ENCODE measurements at regions of chr14 and their contacts with region 1.

Region 1: GRCh38 chr14:22556990-22557623 is 31.9 kb downstream of the DAD1 start:
- DNase-seq: peak; percentile 93
- ATAC-seq: peak; percentile 42
- H3K4me3 ChIP-seq: peak overlapping the region; percentile 7 to 71 (median 49)
- H3K4me3 Mint-ChIP-seq: peak overlapping the region; percentile 73
- H3K27ac ChIP-seq: peak overlapping the region; percentile 99 to 100
- H3K27ac Mint-ChIP-seq: peak overlapping the region; percentile 97
- H3K4me1 ChIP-seq: peaks cover 61 to 85% of the 10 kb centered on the region in 2 donors
- H3K4me1 Mint-ChIP-seq: peaks cover 84% of the 10 kb centered on the region
- H3K27me3 ChIP-seq: no peaks in the 10 kb centered on the region
- H3K27me3 Mint-ChIP-seq: peaks cover 3% of the 10 kb centered on the region
- CTCF ChIP-seq: peak; percentile 100

Region 2: DNA sequence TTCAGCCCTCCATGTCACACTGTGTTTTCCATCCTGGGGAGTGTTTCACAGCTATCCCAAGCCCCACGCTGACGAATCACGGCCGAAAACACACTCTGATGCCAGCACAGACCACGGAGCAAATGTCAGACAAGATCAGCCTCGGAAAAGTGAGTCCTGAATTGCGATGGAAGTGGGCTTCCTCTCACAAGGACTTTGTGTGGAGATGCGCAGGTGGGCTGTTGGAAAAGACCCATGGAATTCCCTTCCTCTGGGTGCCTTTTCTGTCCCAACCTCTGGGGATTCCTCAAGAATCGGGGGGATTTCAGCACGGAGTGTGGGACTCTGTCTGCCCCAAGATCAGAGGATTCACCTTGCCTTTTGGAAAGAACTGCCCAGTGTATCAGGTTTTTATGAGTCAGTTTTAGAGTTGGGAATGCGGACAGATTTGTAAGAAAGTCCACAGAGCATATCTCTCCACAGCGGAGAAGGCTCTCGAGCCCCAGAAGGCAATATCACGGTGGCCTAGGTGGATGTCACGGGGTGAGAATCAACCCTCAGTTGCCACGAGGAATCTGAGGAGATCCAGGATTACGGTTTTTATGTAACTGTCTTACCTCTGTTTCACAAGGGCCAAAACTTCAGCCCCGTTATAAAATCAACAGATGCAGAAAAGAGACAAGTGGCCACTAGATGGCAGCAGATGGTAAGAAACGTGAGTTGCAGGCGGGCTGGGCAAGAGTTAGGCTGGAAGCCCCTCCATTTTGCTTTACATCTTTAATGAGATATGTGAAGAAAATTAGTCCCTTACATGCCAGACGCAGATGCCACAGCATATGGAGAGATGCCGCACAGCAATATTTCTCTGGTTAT is 170.0 kb before region 1 on chr14:
- CTCF ChIA-PET with region 1: interaction called, 354 read pairs
- POLR2A ChIA-PET with region 1: interaction called, 14 read pairs
- intact Hi-C with region 1: loop called (anchors 1 kb)
- DNase-seq: peak; percentile 91
- ATAC-seq: peak; percentile 34
- H3K4me3 ChIP-seq: no peak overlapping the region
- H3K4me3 Mint-ChIP-seq: peak overlapping the region; percentile 69
- H3K27ac ChIP-seq: no peak overlapping the region
- H3K27ac Mint-ChIP-seq: peak overlapping the region; percentile 12
- H3K4me1 ChIP-seq: peaks cover 38 to 49% of the 10 kb centered on the region in 2 donors
- H3K4me1 Mint-ChIP-seq: peaks cover 82% of the 10 kb centered on the region
- H3K27me3 ChIP-seq: no peaks in the 10 kb centered on the region
- H3K27me3 Mint-ChIP-seq: no peaks in the 10 kb centered on the region
- CTCF ChIP-seq: peak; percentile 83

Region 3: GRCh38 chr14:22491683-22492621 is 65.2 kb before region 1 on chr14:
- CTCF ChIA-PET with region 1: interaction called, 44 read pairs
- POLR2A ChIA-PET with region 1: interaction called, 7 read pairs
- intact Hi-C with region 1: loop called (anchors 2 kb)
- DNase-seq: peak; percentile 52
- ATAC-seq: peak; percentile 38
- H3K4me3 ChIP-seq: no peak overlapping the region
- H3K4me3 Mint-ChIP-seq: peak overlapping the region; percentile 30
- H3K27ac ChIP-seq: peak overlapping the region; percentile 16 to 26
- H3K27ac Mint-ChIP-seq: peak overlapping the region; percentile 86
- H3K4me1 ChIP-seq: peaks cover 25 to 71% of the 10 kb centered on the region in 2 donors
- H3K4me1 Mint-ChIP-seq: peaks cover 93% of the 10 kb centered on the region
- H3K27me3 ChIP-seq: no peaks in the 10 kb centered on the region
- H3K27me3 Mint-ChIP-seq: no peaks in the 10 kb centered on the region
- CTCF ChIP-seq: no peak

Region 4: GRCh38 chr14:22536853-22537338 is 20.2 kb before region 1 on chr14:
- CTCF ChIA-PET with region 1: interaction called, 72 read pairs
- POLR2A ChIA-PET with region 1: interaction called, 16 read pairs
- intact Hi-C with region 1: no loop called
- DNase-seq: no peak
- ATAC-seq: peak; percentile 96
- H3K4me3 ChIP-seq: no peak overlapping the region
- H3K4me3 Mint-ChIP-seq: peak overlapping the region; percentile 54
- H3K27ac ChIP-seq: no peak overlapping the region
- H3K27ac Mint-ChIP-seq: peak overlapping the region; percentile 81
- H3K4me1 ChIP-seq: peaks cover 34 to 43% of the 10 kb centered on the region in 2 donors
- H3K4me1 Mint-ChIP-seq: peaks cover 77% of the 10 kb centered on the region
- H3K27me3 ChIP-seq: no peaks in the 10 kb centered on the region
- H3K27me3 Mint-ChIP-seq: no peaks in the 10 kb centered on the region
- CTCF ChIP-seq: no peak

Region 5: DNA sequence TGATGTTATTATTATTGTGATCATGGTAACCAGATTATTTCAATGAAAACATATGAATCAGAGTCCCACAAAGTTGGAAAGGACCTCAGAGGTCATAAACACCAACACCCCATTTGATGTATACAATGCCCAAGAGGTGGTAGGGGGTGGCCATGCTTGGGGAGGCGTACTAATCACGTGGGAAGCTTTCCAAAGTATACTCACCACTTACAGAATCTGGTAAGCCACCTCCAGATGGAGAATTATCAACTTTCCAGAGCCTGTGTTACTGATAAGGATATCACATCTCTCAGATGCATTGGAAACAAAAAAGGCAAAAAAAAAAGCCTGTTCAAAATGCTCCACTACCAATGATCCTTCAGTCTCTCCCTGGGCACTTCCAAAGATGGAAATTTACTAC is 23.5 kb after region 1 on chr14:
- CTCF ChIA-PET with region 1: no interaction called
- POLR2A ChIA-PET with region 1: no interaction called
- intact Hi-C with region 1: no loop called
- DNase-seq: no peak
- ATAC-seq: no peak
- H3K4me3 ChIP-seq: no peak overlapping the region
- H3K4me3 Mint-ChIP-seq: no peak overlapping the region
- H3K27ac ChIP-seq: no peak overlapping the region
- H3K27ac Mint-ChIP-seq: no peak overlapping the region
- H3K4me1 ChIP-seq: peaks cover 8 to 14% of the 10 kb centered on the region in 2 donors
- H3K4me1 Mint-ChIP-seq: peaks cover 43% of the 10 kb centered on the region
- H3K27me3 ChIP-seq: no peaks in the 10 kb centered on the region
- H3K27me3 Mint-ChIP-seq: no peaks in the 10 kb centered on the region
- CTCF ChIP-seq: no peak

Region 6: DNA sequence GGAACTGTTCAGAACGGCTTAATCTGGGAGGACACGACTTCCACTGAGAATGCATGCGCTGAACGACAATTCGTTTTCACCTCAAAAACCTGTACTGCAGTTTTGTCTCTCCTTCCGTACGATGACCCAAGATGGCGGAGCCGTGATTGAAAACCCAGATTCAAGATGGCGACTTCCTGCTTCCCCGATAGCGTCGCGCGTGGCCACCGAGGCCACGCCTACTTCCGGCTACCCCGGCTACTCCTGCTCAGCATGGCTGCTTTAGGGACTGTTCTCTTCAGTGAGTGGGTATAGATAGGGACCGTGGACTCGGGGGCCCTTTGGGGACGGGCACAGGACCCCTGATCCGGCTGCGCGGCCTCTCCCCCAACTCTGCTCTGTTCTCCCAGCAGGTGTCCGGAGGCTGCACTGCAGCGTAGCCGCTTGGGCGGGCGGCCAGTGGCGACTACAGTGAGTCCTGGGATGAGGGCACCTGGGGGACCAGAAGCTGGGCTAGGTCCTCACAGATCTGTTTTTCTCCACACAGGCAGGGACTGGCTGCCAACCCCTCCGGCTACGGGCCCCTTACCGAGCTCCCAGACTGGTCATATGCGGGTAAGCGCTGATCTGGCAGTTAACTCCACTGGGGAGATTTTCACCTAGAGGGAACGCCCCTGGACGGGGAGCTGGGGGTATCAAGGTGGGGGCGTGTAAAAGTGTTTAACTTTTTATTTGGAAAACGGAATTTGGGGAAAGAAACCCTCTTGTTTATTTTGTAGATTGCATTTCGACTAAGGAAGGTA is 272.7 kb after region 1 on chr14 and contains the start of gene MRPL52:
- CTCF ChIA-PET with region 1: interaction called, 5 read pairs
- POLR2A ChIA-PET with region 1: no interaction called
- intact Hi-C with region 1: loop called (anchors 1 kb)
- DNase-seq: peak; percentile 95
- ATAC-seq: peak; percentile 94
- H3K4me3 ChIP-seq: peak within 1 kb of the TSS; percentile 68 to 92 (median 84)
- H3K4me3 Mint-ChIP-seq: peak within 1 kb of the TSS; percentile 84
- H3K27ac ChIP-seq: peak within 1 kb of the TSS; percentile 87 to 91
- H3K27ac Mint-ChIP-seq: peak within 1 kb of the TSS; percentile 93
- H3K4me1 ChIP-seq: peaks cover 18 to 22% of the 10 kb centered on the region in 2 donors
- H3K4me1 Mint-ChIP-seq: peaks cover 30% of the 10 kb centered on the region
- H3K27me3 ChIP-seq: no peaks in the 10 kb centered on the region
- H3K27me3 Mint-ChIP-seq: no peaks in the 10 kb centered on the region
- CTCF ChIP-seq: no peak
- total RNA-seq, gene MRPL52: 91.6 and 93.0 TPM in 2 replicates

Region 7: DNA sequence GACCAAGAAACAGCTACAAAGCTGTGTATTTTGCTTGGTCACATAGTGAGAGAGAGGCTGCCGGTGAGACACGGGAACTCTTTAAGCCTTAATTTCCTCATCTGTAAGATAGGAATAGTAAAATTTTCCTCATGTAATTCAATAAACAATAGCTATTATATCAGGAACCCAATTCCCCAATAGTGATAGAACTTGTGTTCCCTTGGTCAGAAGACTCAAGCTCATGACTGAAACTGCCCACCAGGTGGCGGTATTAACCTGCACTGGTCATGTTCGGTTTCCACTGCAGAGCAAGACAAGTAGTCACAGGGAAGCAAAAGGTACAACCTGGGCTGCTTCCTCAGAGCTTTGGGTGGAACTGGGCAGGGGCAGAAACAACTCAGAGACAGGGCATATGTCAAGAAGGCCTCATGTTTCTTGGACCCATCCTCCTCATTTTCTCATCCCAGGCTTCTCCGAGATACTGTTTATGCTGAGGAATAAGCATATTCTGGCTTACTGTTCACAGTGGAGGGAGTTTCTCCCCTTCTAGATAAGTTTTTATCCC is 429.5 kb after region 1 on chr14:
- CTCF ChIA-PET with region 1: interaction called, 10 read pairs
- POLR2A ChIA-PET with region 1: no interaction called
- intact Hi-C with region 1: loop called (anchors 1 kb)
- DNase-seq: peak; percentile 88
- ATAC-seq: peak; percentile 63
- H3K4me3 ChIP-seq: no peak overlapping the region
- H3K4me3 Mint-ChIP-seq: no peak overlapping the region
- H3K27ac ChIP-seq: no peak overlapping the region
- H3K27ac Mint-ChIP-seq: no peak overlapping the region
- H3K4me1 ChIP-seq: peaks cover 13 to 18% of the 10 kb centered on the region in 2 donors
- H3K4me1 Mint-ChIP-seq: no peaks in the 10 kb centered on the region
- H3K27me3 ChIP-seq: peaks cover 0 to 11% (median 4%) of the 10 kb centered on the region in 4 experiments
- H3K27me3 Mint-ChIP-seq: no peaks in the 10 kb centered on the region
- CTCF ChIP-seq: peak; percentile 89

Measured in B cell (primary cell).